Heart left ventricle (tissue), 16 donors: ENCODE measurements at regions of chr15 and their contacts with region 1.

Region 1: GRCh38 chr15:78108299-78109084 is 16.1 kb downstream of the SH2D7 start:
- DNase-seq: peak; percentile 82 to 93 (median 86)
- ATAC-seq: peak; percentile 65 to 90 (median 89)
- H3K4me3 ChIP-seq: no peak overlapping the region
- H3K27ac ChIP-seq: no peak overlapping the region
- H3K4me1 ChIP-seq: peaks cover 0 to 28% (median 0%) of the 10 kb centered on the region in 12 donors
- H3K27me3 ChIP-seq: no peaks in the 10 kb centered on the region
- CTCF ChIP-seq: peak; percentile 90 to 98 (median 93)
- POLR2A ChIP-seq: no peak

Region 2: GRCh38 chr15:77959432-77959879 is 149.0 kb before region 1 on chr15:
- intact Hi-C with region 1: loop called in 7 of 10 experiments (anchors 1 to 2 kb)
- DNase-seq: peak; percentile 75 to 92 (median 77)
- ATAC-seq: peak; percentile 81 to 99 (median 98)
- H3K4me3 ChIP-seq: peak overlapping the region in 5 of 12 donors; percentile 20 to 39 (median 35)
- H3K27ac ChIP-seq: no peak overlapping the region
- H3K4me1 ChIP-seq: peaks cover 0 to 6% (median 1%) of the 10 kb centered on the region in 12 donors
- H3K27me3 ChIP-seq: no peaks in the 10 kb centered on the region
- CTCF ChIP-seq: peak; percentile 91 to 98 (median 96)
- POLR2A ChIP-seq: no peak

Region 3: GRCh38 chr15:78000091-78000926 is 108.2 kb before region 1 on chr15:
- intact Hi-C with region 1: loop called in 3 of 10 experiments (anchors 5 to 10 kb)
- DNase-seq: peak; percentile 61 to 86 (median 75)
- ATAC-seq: peak; percentile 65 to 79 (median 74)
- H3K4me3 ChIP-seq: no peak overlapping the region
- H3K27ac ChIP-seq: no peak overlapping the region
- H3K4me1 ChIP-seq: peaks cover 5 to 38% (median 20%) of the 10 kb centered on the region in 12 donors
- H3K27me3 ChIP-seq: no peaks in the 10 kb centered on the region
- CTCF ChIP-seq: peak in 10 of 12 donors; percentile 22 to 64 (median 50)
- POLR2A ChIP-seq: no peak

Region 4: GRCh38 chr15:78195735-78196201 is 87.3 kb after region 1 on chr15:
- intact Hi-C with region 1: loop called in 9 of 10 experiments (anchors 1 to 10 kb)
- DNase-seq: peak in 2 of 5 donors; percentile 28 to 67
- ATAC-seq: peak; percentile 79 to 86 (median 80)
- H3K4me3 ChIP-seq: no peak overlapping the region
- H3K27ac ChIP-seq: no peak overlapping the region
- H3K4me1 ChIP-seq: no peaks in the 10 kb centered on the region
- H3K27me3 ChIP-seq: no peaks in the 10 kb centered on the region
- CTCF ChIP-seq: peak; percentile 51 to 74 (median 64)
- POLR2A ChIP-seq: no peak

Region 5: DNA sequence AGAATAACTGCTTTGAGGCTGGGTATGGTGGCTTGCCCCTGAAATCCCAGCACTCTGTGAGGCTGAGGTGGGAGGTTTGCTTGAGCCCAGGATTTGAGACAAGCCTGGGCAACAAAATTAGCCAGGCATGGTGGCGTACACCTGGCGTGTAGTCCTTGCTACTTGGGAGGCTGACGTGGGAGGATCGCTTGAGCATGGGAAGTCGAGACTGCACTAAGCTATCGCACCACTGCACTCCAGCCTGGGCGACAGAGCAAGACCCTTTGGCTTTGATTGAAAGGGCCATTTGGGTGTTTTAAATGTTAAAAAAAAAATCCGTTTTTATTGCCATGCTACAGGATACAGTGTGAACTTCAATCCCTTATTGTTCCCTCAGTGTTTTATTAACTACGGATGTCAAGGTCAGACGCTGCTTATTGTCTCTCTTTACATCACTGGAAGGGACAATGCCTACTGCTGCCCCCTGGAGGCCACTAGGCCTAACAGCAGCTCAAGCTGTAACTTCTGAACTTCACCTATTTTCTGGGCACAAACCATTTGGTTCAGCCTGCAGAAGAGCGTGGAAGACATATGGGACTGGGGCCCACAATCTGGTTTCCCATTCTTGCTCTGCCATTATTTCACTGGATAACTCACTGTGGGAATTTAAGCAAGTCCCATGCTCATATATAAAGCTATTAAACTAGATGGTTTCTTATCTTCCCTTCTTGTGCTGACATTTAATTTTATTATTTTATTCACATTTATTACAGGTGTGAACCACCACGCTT is 314.3 kb after region 1 on chr15:
- intact Hi-C with region 1: loop called in 8 of 10 experiments (anchors 5 to 10 kb)
- DNase-seq: peak; percentile 39 to 67 (median 57)
- ATAC-seq: peak in 3 of 4 donors; percentile 53 to 75 (median 74)
- H3K4me3 ChIP-seq: no peak overlapping the region
- H3K27ac ChIP-seq: no peak overlapping the region
- H3K4me1 ChIP-seq: peaks cover 0 to 11% (median 0%) of the 10 kb centered on the region in 12 donors
- H3K27me3 ChIP-seq: no peaks in the 10 kb centered on the region
- CTCF ChIP-seq: peak; percentile 88 to 96 (median 93)
- POLR2A ChIP-seq: no peak

Region 6: DNA sequence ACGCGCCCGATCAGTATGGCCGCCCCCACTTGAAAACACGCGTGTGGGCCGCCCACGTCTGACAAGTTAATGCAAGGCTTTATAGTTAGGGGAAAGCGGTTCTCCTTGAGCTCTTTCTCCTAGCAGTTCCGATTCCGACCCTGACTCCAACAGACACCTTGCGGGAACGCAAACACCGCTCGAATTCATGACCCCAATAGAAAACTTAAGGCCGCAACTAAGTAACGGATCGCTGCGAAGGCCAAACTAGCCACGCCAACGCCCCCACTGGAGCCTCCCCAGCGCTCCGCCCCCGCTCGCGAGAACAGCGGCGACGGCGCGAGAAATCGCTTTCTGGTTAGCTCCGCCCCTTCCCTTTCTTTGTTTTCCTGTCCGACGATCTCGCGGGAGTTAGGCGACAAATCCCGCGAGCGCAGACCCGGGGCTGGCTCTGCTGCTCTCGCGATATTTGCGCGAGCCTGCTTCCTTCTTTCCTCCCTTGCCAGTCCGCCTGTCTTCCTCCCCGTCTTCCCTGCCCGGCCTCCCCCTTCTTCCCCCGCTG is 329.3 kb after region 1 on chr15 and contains the start of gene IREB2:
- intact Hi-C with region 1: no loop called
- DNase-seq: peak; percentile 97 to 98 (median 98)
- ATAC-seq: peak; percentile 96 to 98 (median 98)
- H3K4me3 ChIP-seq: peak within 1 kb of the TSS; percentile 69 to 96 (median 87)
- H3K27ac ChIP-seq: peak within 1 kb of the TSS; percentile 86 to 98 (median 96)
- H3K4me1 ChIP-seq: peaks cover 4 to 49% (median 41%) of the 10 kb centered on the region in 12 donors
- H3K27me3 ChIP-seq: no peaks in the 10 kb centered on the region
- CTCF ChIP-seq: peak in 2 of 12 donors; percentile 4 to 18
- POLR2A ChIP-seq: peak in 1 of 2 donors; percentile 65
- total RNA-seq, gene IREB2: 12.9 to 50.0 (median 30.0) TPM